ENCODE measurements at regions of chr10 and their contacts with region 1.

Region 1: GRCh38 chr10:123743976-123744411 is 77.8 kb downstream of the GPR26 start:
- DNase-seq: no peak
- ATAC-seq: no peak

Region 2: GRCh38 chr10:123689880-123690279 is 54.1 kb before region 1 on chr10:
- intact Hi-C with region 1: loop called in 1 of 2 experiments (anchors 2 kb)
- DNase-seq: no peak
- ATAC-seq: no peak

Region 3: DNA sequence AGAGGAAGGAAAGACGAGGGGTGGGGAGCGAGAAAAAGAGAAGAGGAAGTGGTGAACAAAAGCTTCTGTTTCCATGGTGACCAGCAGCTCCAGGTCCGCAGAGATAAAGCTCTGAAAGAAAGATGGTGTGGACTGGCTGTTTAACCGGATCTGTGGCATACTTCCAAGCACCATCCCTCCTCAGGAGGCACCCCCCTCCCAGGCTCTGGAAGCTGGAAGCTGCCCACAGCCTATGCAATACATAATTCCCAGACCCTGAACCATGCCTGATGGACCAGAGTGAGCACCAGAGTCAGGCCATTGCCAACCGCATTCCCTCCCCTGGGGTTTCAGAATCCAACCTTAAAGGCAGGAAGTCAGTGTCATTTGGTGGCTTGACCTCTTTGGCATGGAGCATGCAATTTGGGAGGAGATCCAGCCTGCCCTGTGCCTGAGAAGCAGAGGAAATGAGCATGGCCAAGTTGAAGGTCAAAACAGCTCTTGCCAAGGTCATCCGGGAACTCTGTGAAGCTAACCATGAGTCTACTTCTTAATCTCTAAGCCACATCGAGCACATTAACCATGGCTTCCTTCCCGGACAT is 169.8 kb after region 1 on chr10:
- intact Hi-C with region 1: no loop called
- DNase-seq: peak; percentile 50
- ATAC-seq: peak; percentile 47 to 65